ENCODE measurements at regions of chr2 and their contacts with region 1.

Region 1: GRCh38 chr2:211503856-211504255 is 947.5 kb downstream of the CPS1 start:
- DNase-seq: no peak
- H3K4me3 Mint-ChIP-seq: no peak overlapping the region
- H3K27ac Mint-ChIP-seq: no peak overlapping the region
- H3K4me1 Mint-ChIP-seq: no peaks in the 10 kb centered on the region
- H3K27me3 Mint-ChIP-seq: no peaks in the 10 kb centered on the region

Region 2: DNA sequence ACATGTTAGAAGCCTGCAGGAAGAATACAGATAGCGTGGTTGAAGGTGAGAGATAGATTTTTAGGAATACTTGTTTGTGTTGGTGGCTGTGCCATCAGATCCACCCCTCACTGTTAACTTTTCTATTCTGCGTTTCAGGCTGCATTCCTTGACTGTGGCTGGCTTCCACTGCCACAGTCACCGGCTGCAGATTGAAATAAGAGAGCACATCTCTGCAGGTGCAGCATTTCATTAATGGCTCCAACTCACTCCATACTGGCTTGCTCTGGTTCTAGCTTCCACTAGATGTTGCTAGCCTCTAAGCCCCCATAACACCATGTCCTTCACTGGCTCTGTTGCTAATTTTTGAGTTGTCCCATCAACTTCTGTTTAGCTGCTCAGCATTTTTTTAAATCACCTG is 661.0 kb before region 1 on chr2:
- intact Hi-C with region 1: no loop called
- DNase-seq: no peak
- H3K4me3 Mint-ChIP-seq: no peak overlapping the region
- H3K27ac Mint-ChIP-seq: no peak overlapping the region
- H3K4me1 Mint-ChIP-seq: no peaks in the 10 kb centered on the region
- H3K27me3 Mint-ChIP-seq: no peaks in the 10 kb centered on the region

Region 3: DNA sequence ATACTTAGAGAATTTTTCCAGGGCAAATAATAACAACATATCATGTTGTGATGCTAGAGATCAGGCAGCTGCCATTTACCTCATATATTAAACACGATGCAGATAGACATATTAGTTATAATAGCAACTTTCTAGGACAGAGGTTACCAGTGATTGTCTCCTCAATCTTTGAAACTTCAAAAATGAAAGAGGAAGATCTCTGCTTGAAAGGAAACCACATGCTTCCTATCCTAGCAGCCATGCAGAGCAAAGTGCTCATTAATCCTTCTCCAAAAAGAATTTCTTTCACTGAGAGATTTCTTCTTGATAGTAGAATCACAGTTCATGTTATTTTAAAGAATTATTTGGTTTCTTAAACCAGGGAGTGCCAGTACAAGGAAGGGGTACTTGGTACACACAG is 630.2 kb before region 1 on chr2:
- intact Hi-C with region 1: no loop called
- DNase-seq: no peak
- H3K4me3 Mint-ChIP-seq: no peak overlapping the region
- H3K27ac Mint-ChIP-seq: no peak overlapping the region
- H3K4me1 Mint-ChIP-seq: no peaks in the 10 kb centered on the region
- H3K27me3 Mint-ChIP-seq: no peaks in the 10 kb centered on the region

Region 4: DNA sequence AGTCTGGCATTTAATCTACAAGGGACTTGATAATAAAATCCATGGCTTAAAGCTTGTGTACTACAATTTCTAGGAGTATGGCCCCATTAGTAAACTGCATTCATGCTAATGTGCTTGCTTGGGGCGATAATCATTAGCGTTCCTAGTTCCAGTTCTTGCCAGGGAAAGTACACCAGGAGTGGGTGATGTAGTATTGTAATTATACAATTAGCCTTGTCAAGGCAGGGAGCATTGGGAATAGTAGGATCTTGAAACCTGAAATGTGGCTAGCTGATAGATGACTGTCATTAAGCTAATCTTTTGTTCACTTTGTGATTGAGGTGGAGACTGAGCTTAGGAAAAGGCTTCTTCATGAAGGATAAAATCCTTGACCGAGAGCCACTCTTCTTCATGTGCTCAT is 41.7 kb after region 1 on chr2:
- intact Hi-C with region 1: loop called (anchors 2 kb)
- DNase-seq: no peak
- H3K4me3 Mint-ChIP-seq: no peak overlapping the region
- H3K27ac Mint-ChIP-seq: no peak overlapping the region
- H3K4me1 Mint-ChIP-seq: no peaks in the 10 kb centered on the region
- H3K27me3 Mint-ChIP-seq: no peaks in the 10 kb centered on the region

Measured in activated T-helper 2 cell treated with anti-CD3 and anti-CD28 coated beads, Interferon-gamma antibody, Interleukin-2, Interleukin-4, amounts not matched to agents 10 μg/mL and 5 μg/mL and 100 μg/mL, durations not matched to agents 14 hours and 24 hours and 36 hours (primary cell).